Head of caudate nucleus (tissue), 42 donors: ENCODE measurements at regions of chr5 and their contacts with region 1.

Region 1: GRCh38 chr5:135977375-135977928 is 22.7 kb upstream of the LECT2 start:
- DNase-seq: peak in 41 of 42 donors; percentile 12 to 79 (median 51)

Region 2: DNA sequence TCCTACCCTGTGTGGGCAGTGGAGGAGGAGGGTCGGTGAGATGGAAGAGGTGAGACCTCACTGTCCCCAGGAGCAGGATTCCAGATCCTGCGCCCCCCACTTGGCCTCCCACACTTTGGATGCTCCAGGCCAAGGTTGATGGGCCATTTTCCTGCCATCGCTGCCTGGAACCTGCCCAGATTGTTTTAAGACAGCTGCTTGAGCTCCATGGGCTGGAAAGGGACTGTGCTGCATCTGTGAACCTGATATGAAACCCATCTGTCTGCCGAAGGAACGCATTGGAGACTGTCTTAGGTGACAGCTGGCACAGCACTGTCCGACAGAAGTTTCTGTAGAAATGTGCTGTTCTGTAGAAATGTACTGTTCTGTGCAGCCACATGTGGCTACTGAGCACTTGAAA is 215.7 kb before region 1 on chr5:
- intact Hi-C with region 1: no loop called
- DNase-seq: no peak

Region 3: DNA sequence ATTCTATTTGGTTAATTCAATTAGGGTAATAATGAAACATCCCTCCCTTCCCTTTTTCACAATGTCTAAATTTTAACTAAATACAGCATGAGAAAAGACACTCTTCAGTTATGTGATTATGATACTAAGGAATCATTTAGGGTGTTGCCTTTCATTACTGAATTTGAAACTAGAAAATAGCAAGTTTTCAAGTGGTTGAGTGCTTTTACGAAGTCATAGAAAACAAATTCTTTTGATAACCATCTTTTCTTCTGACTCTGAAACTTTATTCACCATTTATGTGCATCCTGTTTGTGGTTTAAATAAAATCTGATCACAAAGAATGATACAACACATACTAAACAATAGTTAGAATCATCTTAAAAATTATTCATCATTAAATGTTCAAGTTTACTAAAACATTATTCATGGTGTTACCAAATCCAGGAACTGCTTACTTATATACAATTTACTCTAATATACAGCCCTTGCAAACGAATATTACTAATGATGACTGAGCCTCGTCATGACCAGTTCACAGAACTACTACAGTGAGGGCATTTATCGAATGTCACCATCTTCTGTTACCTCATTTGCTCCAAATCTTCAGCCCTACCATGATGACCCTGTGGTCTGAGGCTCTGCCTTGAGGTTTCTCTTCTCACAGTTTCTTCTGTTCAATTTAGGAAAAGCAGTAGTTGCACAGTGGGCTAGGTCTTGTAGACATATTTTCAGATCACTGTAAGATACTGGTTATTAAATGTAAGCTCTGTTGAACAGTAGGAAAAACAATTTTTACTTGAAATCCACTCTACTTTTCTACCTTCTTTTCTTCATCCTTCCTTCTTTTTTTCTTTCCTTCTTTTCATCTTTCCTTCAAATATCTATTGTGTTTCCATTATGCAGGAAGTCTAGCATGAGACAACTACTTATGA is 63.5 kb before region 1 on chr5:
- intact Hi-C with region 1: loop called (anchors 2 kb)
- DNase-seq: no peak